T-cell (primary cell): ENCODE measurements at regions of chr1 and their contacts with region 1.

Region 1: GRCh38 chr1:70509996-70510876 is 99.2 kb downstream of the CTH start:
- DNase-seq: peak in 1 of 35 experiments; percentile 67
- ATAC-seq: peak; percentile 44 to 61 (median 52)
- H3K4me3 ChIP-seq: no peak overlapping the region
- H3K4me3 Mint-ChIP-seq: no peak overlapping the region
- H3K27ac ChIP-seq: no peak overlapping the region
- H3K27ac Mint-ChIP-seq: no peak overlapping the region
- H3K4me1 ChIP-seq: no peaks in the 10 kb centered on the region
- H3K4me1 Mint-ChIP-seq: no peaks in the 10 kb centered on the region
- H3K27me3 ChIP-seq: peaks cover 0 to 4% of the 10 kb centered on the region in 2 experiments
- H3K27me3 Mint-ChIP-seq: peaks cover 9 to 14% of the 10 kb centered on the region in 2 donors

Region 2: DNA sequence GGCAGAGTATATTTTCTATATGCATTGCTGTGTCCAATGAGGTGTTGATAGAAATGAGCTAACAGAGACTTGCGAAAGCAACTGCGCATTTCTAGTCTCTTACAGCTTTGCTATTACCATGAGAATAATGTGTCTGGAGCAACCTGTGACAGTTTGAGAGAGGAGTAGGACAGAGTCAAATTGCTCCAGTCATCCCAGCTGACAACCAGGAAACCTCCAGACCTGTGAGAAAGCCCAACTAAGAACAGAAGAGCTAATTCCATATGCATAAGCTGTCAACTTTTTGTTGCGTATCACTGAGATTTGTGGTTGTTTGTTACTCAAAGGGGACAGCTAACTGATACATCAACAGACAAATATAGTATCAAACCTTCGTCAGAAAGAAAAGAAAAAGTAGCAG is 1296.6 kb before region 1 on chr1:
- CTCF ChIA-PET with region 1: interaction called in 1 of 2 experiments, 10 read pairs
- POLR2A ChIA-PET with region 1: no interaction called
- DNase-seq: no peak
- ATAC-seq: no peak
- H3K4me3 ChIP-seq: no peak overlapping the region
- H3K4me3 Mint-ChIP-seq: no peak overlapping the region
- H3K27ac ChIP-seq: no peak overlapping the region
- H3K27ac Mint-ChIP-seq: no peak overlapping the region
- H3K4me1 ChIP-seq: no peaks in the 10 kb centered on the region
- H3K4me1 Mint-ChIP-seq: no peaks in the 10 kb centered on the region
- H3K27me3 ChIP-seq: no peaks in the 10 kb centered on the region
- H3K27me3 Mint-ChIP-seq: no peaks in the 10 kb centered on the region

Region 3: DNA sequence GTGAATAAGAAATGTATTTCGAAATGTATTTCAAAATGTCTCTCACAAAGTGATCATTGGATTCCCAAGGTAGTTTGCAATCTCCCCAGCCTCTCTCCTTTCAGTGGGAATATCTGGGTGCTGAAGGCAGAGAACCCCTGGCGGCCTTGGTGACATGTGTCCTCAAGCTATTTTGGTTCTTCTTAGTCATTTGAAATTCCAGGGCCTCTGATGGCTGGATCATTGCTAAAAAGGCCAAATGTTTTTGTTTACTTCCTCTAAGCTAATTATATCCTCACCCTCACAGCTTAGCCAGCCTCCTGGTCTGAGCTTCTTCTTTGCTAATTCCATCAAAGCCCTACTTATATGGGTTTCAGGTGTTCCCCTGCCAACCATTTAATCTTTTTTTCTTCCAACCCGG is 376.1 kb before region 1 on chr1:
- CTCF ChIA-PET with region 1: interaction called, 8 to 13 read pairs
- POLR2A ChIA-PET with region 1: interaction called, 3 to 6 read pairs
- DNase-seq: no peak
- ATAC-seq: no peak
- H3K4me3 ChIP-seq: no peak overlapping the region
- H3K4me3 Mint-ChIP-seq: no peak overlapping the region
- H3K27ac ChIP-seq: no peak overlapping the region
- H3K27ac Mint-ChIP-seq: no peak overlapping the region
- H3K4me1 ChIP-seq: no peaks in the 10 kb centered on the region
- H3K4me1 Mint-ChIP-seq: no peaks in the 10 kb centered on the region
- H3K27me3 ChIP-seq: peaks cover 0 to 3% of the 10 kb centered on the region in 2 experiments
- H3K27me3 Mint-ChIP-seq: peaks cover 0 to 2% of the 10 kb centered on the region in 2 donors

Region 4: DNA sequence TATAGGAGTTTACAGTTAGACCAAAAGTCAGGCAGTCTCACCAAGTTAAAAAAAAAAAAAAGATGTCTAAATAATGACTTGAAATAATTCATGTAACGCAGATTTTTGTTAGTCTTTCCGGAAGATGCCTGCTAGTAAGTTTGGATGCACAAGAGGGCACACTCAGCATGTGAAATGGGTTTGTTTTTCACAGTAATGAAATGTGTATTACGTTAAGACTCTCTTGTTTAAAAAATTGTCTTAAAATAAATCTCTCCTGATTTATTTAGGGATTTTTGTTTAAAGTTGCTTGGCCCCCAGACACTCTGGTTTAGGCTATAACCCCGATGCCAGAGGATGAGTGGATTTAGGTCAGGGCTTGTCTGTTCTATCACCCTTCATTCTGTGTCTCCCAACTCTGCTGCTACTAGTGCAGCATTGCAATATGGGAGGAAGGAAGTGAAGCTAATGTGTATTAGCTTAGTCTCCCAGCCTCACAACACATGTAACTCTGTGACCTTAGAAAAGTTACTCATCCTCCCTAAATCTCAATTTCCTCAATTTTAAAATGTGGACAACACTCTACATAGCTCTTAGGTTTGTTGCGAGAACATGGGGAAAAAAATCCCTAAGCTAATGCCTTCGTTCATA is 73.5 kb before region 1 on chr1:
- CTCF ChIA-PET with region 1: no interaction called
- POLR2A ChIA-PET with region 1: no interaction called
- DNase-seq: no peak
- ATAC-seq: no peak
- H3K4me3 ChIP-seq: no peak overlapping the region
- H3K4me3 Mint-ChIP-seq: no peak overlapping the region
- H3K27ac ChIP-seq: no peak overlapping the region
- H3K27ac Mint-ChIP-seq: no peak overlapping the region
- H3K4me1 ChIP-seq: no peaks in the 10 kb centered on the region
- H3K4me1 Mint-ChIP-seq: no peaks in the 10 kb centered on the region
- H3K27me3 ChIP-seq: no peaks in the 10 kb centered on the region
- H3K27me3 Mint-ChIP-seq: no peaks in the 10 kb centered on the region